ENCODE measurements at regions of chr5 and their contacts with region 1.

Region 1: DNA sequence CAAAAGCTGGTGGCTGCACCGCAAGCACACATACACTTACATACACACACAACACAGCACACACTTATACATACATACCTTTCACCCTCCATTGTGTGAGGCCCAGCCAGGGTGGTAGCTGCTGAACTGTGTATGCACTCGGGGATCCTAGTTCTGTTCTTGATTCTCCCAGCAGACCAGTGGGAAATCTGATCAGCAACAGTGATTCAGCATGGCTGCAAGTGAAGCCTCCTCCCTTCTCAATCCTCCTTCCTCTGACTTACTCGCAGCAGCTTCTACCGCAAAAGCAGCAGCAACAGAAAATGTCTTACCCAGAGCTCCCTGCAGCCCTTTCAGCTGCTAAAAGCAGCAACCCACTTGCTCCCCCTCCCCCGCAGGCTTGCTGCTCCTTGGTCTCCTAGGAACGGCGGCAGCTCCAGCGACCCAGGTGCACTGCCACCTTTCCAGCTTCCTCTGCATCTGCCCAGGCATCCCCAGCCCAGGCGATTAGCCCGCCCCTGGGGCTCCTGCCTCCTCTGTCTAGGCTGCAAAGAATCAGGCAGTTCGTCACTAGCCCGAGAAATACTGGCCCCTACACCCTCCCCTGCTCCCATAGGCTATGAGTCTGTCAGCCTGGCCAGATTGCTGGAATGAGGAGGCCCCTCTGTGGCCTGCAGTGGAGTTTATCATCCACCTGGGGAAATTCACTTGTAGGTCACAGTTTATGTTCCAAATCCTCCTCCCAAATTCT is at the start of gene KLHL3:
- ATAC-seq: peak; percentile 73 to 95 (median 94)
- H3K4me3 ChIP-seq: peak within 1 kb of the TSS; percentile 46 to 59 (median 49)
- H3K27ac ChIP-seq: peak within 1 kb of the TSS; percentile 46 to 66
- H3K4me1 ChIP-seq: peaks cover 12 to 14% of the 10 kb centered on the region in 2 donors
- total RNA-seq, gene KLHL3: 2.3 to 7.2 (median 5.0) TPM

Region 2: GRCh38 chr5:136906582-136906981 is 829.1 kb before region 1 on chr5:
- in situ Hi-C with region 1: no loop called
- ATAC-seq: no peak
- H3K4me3 ChIP-seq: no peak overlapping the region
- H3K27ac ChIP-seq: no peak overlapping the region
- H3K4me1 ChIP-seq: no peaks in the 10 kb centered on the region

Region 3: GRCh38 chr5:137022043-137022442 is 713.7 kb before region 1 on chr5:
- in situ Hi-C with region 1: no loop called
- ATAC-seq: no peak
- H3K4me3 ChIP-seq: no peak overlapping the region
- H3K27ac ChIP-seq: no peak overlapping the region
- H3K4me1 ChIP-seq: peaks cover 0 to 7% of the 10 kb centered on the region in 2 donors

Region 4: GRCh38 chr5:137545956-137546355 is 189.8 kb before region 1 on chr5:
- in situ Hi-C with region 1: no loop called
- ATAC-seq: no peak
- H3K4me3 ChIP-seq: no peak overlapping the region
- H3K27ac ChIP-seq: no peak overlapping the region
- H3K4me1 ChIP-seq: no peaks in the 10 kb centered on the region

Region 5: GRCh38 chr5:137660349-137660817 is 75.3 kb before region 1 on chr5:
- in situ Hi-C with region 1: loop called in 1 of 9 experiments (anchors 10 kb)
- ATAC-seq: peak; percentile 64 to 98 (median 85)
- H3K4me3 ChIP-seq: no peak overlapping the region
- H3K27ac ChIP-seq: no peak overlapping the region
- H3K4me1 ChIP-seq: no peaks in the 10 kb centered on the region

Region 6: DNA sequence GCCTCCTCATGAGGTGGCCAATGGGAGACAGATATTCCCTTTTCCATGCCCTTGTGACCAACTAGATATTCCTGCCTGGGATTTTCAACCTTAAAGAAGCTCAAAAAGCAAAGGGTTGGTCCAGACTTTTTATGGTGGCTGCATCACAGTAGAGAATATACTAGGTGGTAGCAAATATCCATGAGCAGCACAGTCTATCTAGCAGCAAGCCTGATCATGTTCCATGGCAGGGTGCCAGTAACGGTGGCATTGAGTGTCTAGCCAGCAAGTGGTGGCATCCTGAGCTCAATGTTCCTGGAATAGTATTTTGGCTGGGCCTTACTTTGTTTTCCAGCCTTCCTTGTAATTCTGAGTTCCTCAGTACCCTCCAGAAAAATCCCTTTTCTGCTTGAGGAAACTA is 570.1 kb after region 1 on chr5:
- in situ Hi-C with region 1: no loop called
- ATAC-seq: no peak
- H3K4me3 ChIP-seq: no peak overlapping the region
- H3K27ac ChIP-seq: no peak overlapping the region
- H3K4me1 ChIP-seq: no peaks in the 10 kb centered on the region

Measured in motor neuron (in vitro differentiated cells).